ENCODE measurements at regions of chr7 and their contacts with region 1.

Region 1: DNA sequence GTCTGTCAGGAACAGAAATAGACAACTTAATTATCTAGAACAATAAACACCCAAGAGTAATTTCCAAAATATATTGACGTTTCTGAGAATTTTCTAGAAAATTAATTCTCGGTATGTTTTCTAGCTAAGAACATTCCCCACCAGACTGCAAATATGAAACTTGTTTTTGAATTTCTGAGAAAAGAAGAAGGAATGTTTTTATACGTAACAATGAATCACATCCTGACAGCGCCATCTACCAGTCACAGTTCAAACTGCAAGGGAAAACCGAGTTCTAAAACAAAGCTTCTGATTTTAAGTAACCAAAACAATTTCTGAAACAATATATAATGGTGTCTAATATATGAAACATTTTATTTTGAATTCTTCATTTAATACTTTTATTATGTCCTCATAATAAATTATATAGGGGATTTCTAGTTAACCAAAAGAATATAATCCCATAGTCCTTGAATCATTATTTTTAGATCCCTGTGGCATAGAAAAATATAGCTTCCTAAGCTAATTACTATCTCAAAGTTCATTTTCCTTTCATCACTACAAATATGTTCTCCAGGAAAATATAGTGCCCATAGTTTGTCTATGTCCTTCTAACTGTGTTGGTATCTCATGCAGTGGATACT is 34.5 kb upstream of the MEOX2 start:
- DNase-seq: peak in 2 of 10 donors; percentile 39 to 54
- H3K4me3 ChIP-seq: no peak overlapping the region
- H3K27ac ChIP-seq: no peak overlapping the region
- H3K27me3 ChIP-seq: no peaks in the 10 kb centered on the region
- CTCF ChIP-seq: peak; percentile 20 to 93 (median 75)

Region 2: DNA sequence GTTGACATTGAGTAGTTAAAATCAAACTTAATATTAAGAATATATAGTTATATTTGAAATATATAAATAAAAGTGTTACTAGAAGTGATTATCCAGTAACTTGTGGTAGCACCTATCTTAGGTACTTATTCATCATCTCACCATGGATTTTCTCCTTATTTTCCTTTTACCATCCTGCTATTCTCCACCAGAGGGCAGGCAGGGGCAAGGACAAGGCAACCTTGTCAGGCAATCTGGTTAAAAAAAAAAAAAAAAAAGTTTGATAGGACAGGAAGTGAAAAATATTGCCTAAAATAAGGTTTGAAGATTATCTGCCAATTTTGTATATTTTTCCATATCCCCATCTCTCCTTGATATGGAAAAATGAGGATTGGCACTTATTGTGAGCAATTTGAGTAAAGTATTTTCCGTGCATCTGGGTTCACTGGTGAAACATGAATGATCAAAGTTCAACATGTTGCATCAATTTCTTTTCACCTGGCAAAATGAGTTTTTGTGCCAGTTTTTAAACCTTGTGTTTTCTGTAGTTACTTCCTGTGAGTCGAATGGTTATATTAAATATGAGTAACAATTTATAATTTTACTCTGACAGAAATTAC is 415.9 kb before region 1 on chr7:
- intact Hi-C with region 1: loop called in 1 of 2 experiments (anchors 5 kb)
- DNase-seq: peak in 2 of 10 donors; percentile 36 to 42
- H3K4me3 ChIP-seq: no peak overlapping the region
- H3K27ac ChIP-seq: no peak overlapping the region
- H3K27me3 ChIP-seq: no peaks in the 10 kb centered on the region
- CTCF ChIP-seq: peak in 55 of 56 donors; percentile 58 to 87 (median 72)

Region 3: GRCh38 chr7:15561835-15562234 is 159.1 kb before region 1 on chr7 and contains the start of gene AGMO:
- intact Hi-C with region 1: loop called in 1 of 2 experiments (anchors 5 kb)
- DNase-seq: peak; percentile 3 to 81 (median 58)
- H3K4me3 ChIP-seq: peak within 1 kb of the TSS in 56 of 59 donors; percentile 1 to 64 (median 43)
- H3K27ac ChIP-seq: peak within 1 kb of the TSS in 58 of 59 donors; percentile 46 to 96 (median 84)
- H3K27me3 ChIP-seq: no peaks in the 10 kb centered on the region
- CTCF ChIP-seq: peak in 24 of 56 donors; percentile 5 to 49 (median 27)
- total RNA-seq, gene AGMO: 0.20 to 6.6 (median 1.2) TPM in 117 of 120 experiments, not detected in the others

Region 4: DNA sequence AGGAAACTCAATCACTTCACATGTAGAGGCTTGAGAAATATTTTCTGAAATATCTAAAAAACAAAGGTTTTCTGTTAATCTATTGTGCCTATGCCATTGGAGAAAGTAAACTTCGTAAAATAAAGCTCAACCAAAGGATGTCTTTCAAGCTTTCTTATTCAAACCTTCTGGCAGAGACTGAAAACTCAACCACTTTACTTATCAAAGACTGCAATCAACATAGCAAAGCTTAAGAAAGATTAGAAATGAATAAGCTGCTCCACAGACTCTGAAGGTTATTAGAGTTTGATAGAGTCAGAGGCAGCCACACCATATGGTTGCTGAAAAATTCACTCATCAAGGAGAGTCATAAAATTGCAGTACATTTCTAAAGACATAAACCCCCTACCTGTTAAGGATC is 211.4 kb after region 1 on chr7:
- intact Hi-C with region 1: no loop called
- DNase-seq: no peak
- H3K4me3 ChIP-seq: no peak overlapping the region
- H3K27ac ChIP-seq: no peak overlapping the region
- H3K27me3 ChIP-seq: no peaks in the 10 kb centered on the region
- CTCF ChIP-seq: no peak

Region 5: GRCh38 chr7:15989194-15989593 is 268.2 kb after region 1 on chr7:
- intact Hi-C with region 1: no loop called
- DNase-seq: peak in 1 of 10 donors; percentile 36
- H3K4me3 ChIP-seq: no peak overlapping the region
- H3K27ac ChIP-seq: no peak overlapping the region
- H3K27me3 ChIP-seq: no peaks in the 10 kb centered on the region
- CTCF ChIP-seq: no peak